Prostate gland (tissue), 2 donors: ENCODE measurements at regions of chr11 and their contacts with region 1.

Region 1: DNA sequence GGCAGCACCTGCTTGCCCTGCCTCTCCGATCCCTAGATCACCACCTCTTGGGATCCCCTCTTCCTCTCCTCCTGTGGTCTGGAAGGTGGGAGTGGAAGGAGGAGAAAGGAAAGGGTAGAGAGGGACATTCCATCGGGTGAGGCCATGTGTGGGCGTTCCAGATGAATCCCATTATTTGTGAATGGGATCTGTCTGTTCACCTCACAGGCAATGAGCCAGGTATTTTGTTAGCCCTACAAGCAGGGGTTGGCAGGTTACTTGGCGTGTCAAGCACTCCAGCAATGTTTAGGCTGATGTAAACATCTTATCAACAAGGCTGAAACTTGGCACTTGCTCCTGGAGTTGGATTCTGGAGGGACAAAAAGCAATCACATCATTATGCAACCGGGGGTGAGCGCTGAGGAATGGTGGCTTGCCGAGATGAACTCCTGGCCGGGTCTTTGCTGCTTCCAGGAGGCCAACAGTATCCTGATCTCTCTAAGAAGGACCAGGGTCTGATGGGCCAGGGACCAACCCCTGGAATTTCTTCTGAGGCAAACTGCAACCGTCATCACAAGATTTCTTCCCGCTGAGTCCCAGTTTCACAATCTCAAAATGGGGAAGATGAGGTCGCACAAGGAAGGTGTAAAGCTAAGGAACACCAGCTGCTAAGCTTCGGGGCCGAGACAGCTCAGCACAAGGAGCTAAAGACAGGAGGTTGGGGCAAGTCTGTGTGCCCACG is 7.8 kb downstream of the ADAMTS8 start:
- DNase-seq: no peak
- H3K4me3 ChIP-seq: no peak overlapping the region
- H3K27ac ChIP-seq: peak overlapping the region; percentile 29 to 34
- H3K4me1 ChIP-seq: no peaks in the 10 kb centered on the region
- H3K27me3 ChIP-seq: peaks cover 1% of the 10 kb centered on the region
- CTCF ChIP-seq: no peak
- POLR2A ChIP-seq: no peak

Region 2: GRCh38 chr11:130314750-130315285 is 105.8 kb before region 1 on chr11 and contains the start of gene ZBTB44:
- intact Hi-C with region 1: loop called (anchors 5 kb)
- DNase-seq: peak; percentile 92
- H3K4me3 ChIP-seq: peak within 1 kb of the TSS; percentile 80 to 87
- H3K27ac ChIP-seq: peak within 1 kb of the TSS; percentile 93 to 97
- H3K4me1 ChIP-seq: no peaks in the 10 kb centered on the region
- H3K27me3 ChIP-seq: no peaks in the 10 kb centered on the region
- CTCF ChIP-seq: no peak
- POLR2A ChIP-seq: peak; percentile 66
- total RNA-seq, gene ZBTB44: 35.9 to 80.3 TPM

Region 3: DNA sequence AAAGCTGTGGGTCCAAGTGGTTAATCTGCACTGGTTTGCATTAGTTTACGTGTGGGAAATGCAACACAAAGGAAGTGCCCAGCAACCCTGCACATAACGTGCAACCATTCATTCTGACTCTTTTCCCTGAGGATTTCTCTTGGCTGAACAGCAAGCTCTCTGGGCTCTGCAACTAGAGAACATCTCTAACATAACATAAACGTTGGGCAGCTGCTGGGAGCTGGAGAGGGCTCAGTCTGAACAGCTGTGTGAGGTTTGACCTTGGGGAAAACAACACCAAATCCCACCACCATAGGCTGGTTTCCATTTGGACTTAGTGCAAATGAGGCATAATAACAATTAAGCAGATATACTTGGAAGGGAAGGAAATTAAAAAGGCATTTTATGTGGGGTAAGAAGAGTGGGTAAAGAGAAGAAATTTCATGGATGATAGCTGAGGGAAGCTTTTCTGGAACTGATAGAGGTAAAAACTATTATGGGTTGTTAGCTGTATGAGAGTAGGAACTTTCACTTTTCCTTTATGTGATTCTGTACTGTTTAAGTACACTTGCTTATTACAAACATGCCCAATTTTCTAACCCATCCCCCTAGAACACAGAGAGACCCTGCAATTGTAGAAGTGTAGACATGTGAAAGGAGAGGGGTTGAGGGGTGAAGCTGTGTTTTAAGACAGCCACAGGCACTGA is 419.5 kb after region 1 on chr11:
- intact Hi-C with region 1: no loop called
- DNase-seq: no peak
- H3K4me3 ChIP-seq: no peak overlapping the region
- H3K27ac ChIP-seq: no peak overlapping the region
- H3K4me1 ChIP-seq: no peaks in the 10 kb centered on the region
- H3K27me3 ChIP-seq: no peaks in the 10 kb centered on the region
- CTCF ChIP-seq: no peak
- POLR2A ChIP-seq: no peak